ENCODE measurements at regions of chr17 and their contacts with region 1.

Region 1: GRCh38 chr17:75412455-75413317 is 7.2 kb upstream of the GRB2 start:
- DNase-seq: peak; percentile 49 to 88 (median 73)
- ATAC-seq: peak; percentile 90
- H3K4me3 ChIP-seq: peak overlapping the region in 1 of 2 experiments; percentile 22
- H3K4me3 Mint-ChIP-seq: peak overlapping the region; percentile 72
- H3K27ac ChIP-seq: no peak overlapping the region
- H3K27ac Mint-ChIP-seq: peak overlapping the region; percentile 62
- H3K4me1 ChIP-seq: peaks cover 8% of the 10 kb centered on the region
- H3K4me1 Mint-ChIP-seq: peaks cover 16% of the 10 kb centered on the region
- H3K27me3 ChIP-seq: no peaks in the 10 kb centered on the region
- H3K27me3 Mint-ChIP-seq: no peaks in the 10 kb centered on the region
- CTCF ChIP-seq: peak; percentile 70

Region 2: GRCh38 chr17:74493381-74493833 is 919.3 kb before region 1 on chr17:
- CTCF ChIA-PET with region 1: no interaction called
- POLR2A ChIA-PET with region 1: no interaction called
- intact Hi-C with region 1: no loop called
- DNase-seq: peak; percentile 51 to 82 (median 73)
- ATAC-seq: peak; percentile 83
- H3K4me3 ChIP-seq: no peak overlapping the region
- H3K4me3 Mint-ChIP-seq: no peak overlapping the region
- H3K27ac ChIP-seq: no peak overlapping the region
- H3K27ac Mint-ChIP-seq: no peak overlapping the region
- H3K4me1 ChIP-seq: no peaks in the 10 kb centered on the region
- H3K4me1 Mint-ChIP-seq: peaks cover 3% of the 10 kb centered on the region
- H3K27me3 ChIP-seq: no peaks in the 10 kb centered on the region
- H3K27me3 Mint-ChIP-seq: no peaks in the 10 kb centered on the region
- CTCF ChIP-seq: peak; percentile 93

Region 3: DNA sequence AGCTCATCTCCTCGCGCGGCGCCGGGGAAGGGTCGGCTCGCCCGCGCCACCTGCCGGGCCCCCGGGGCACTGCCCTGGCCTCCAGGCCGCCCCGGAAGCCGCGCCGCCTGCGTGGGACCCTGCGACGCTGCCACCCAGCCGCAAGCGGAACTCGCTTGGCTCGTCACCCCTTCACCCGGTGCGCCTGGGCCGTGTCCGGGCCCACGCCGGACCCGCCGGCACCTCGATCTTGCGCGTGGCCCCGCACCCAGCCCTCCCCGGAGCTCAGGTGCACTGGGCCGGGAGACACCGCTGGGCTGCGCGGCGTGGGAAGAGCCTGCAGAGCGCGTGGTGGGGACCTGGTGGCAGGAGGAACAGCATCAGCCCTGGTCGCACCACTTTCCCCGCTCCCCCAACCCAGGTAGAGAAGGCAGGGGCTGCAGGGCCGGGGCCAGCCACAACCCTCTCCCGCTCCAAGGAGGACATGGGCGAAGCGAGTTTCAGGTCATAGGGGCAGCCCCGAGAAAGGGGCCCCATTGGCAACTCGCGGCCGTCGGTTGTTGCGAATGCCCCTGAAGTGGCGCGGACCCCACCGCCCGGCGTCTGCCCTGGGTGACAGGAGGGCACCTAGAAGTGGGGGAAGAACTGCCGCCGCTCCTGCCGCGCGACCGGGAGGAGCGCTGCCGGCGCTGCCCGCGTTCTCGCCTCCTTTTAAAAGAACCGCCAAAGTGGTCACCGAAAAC is 141.3 kb before region 1 on chr17:
- CTCF ChIA-PET with region 1: interaction called, 13 read pairs
- POLR2A ChIA-PET with region 1: interaction called, 6 read pairs
- intact Hi-C with region 1: loop called (anchors 1 kb)
- DNase-seq: peak; percentile 75 to 94 (median 88)
- ATAC-seq: peak; percentile 92
- H3K4me3 ChIP-seq: peak overlapping the region; percentile 84 to 93
- H3K4me3 Mint-ChIP-seq: peak overlapping the region; percentile 81
- H3K27ac ChIP-seq: peak overlapping the region; percentile 82 to 91
- H3K27ac Mint-ChIP-seq: peak overlapping the region; percentile 84
- H3K4me1 ChIP-seq: peaks cover 18% of the 10 kb centered on the region
- H3K4me1 Mint-ChIP-seq: peaks cover 25% of the 10 kb centered on the region
- H3K27me3 ChIP-seq: no peaks in the 10 kb centered on the region
- H3K27me3 Mint-ChIP-seq: no peaks in the 10 kb centered on the region
- CTCF ChIP-seq: peak; percentile 65

Region 4: DNA sequence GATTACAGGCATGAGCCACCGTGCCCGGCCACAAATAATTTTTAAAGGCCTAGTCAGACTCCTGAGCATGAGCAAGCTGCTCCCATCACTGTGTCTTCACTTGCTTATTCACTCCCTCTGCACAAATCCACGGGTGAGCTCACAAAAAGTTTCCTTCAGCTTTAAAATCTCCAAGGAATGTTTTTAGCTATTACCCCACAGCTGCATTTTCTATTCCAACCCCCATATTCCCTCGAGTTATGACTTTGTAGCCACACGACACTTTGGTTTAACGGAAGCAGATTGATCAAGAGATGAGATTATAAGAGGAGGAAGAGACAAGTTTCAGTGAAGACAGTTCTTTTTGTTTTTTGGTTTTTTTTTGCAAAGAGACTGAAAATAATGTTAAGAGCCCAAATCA is 74.4 kb before region 1 on chr17:
- CTCF ChIA-PET with region 1: interaction called, 17 read pairs
- POLR2A ChIA-PET with region 1: no interaction called
- intact Hi-C with region 1: no loop called
- DNase-seq: peak in 1 of 9 experiments; percentile 57
- ATAC-seq: peak; percentile 45
- H3K4me3 ChIP-seq: peak overlapping the region in 1 of 2 experiments; percentile 5
- H3K4me3 Mint-ChIP-seq: peak overlapping the region; percentile 62
- H3K27ac ChIP-seq: peak overlapping the region; percentile 12 to 73
- H3K27ac Mint-ChIP-seq: peak overlapping the region; percentile 91
- H3K4me1 ChIP-seq: peaks cover 78% of the 10 kb centered on the region
- H3K4me1 Mint-ChIP-seq: peaks cover 78% of the 10 kb centered on the region
- H3K27me3 ChIP-seq: no peaks in the 10 kb centered on the region
- H3K27me3 Mint-ChIP-seq: no peaks in the 10 kb centered on the region
- CTCF ChIP-seq: no peak

Region 5: GRCh38 chr17:75393523-75394331 is 19.0 kb before region 1 on chr17:
- CTCF ChIA-PET with region 1: interaction called, 14 read pairs
- POLR2A ChIA-PET with region 1: interaction called, 5 read pairs
- intact Hi-C with region 1: no loop called
- DNase-seq: peak; percentile 47 to 92 (median 83)
- ATAC-seq: peak; percentile 84
- H3K4me3 ChIP-seq: peak overlapping the region; percentile 49 to 53
- H3K4me3 Mint-ChIP-seq: peak overlapping the region; percentile 94
- H3K27ac ChIP-seq: peak overlapping the region; percentile 3 to 63
- H3K27ac Mint-ChIP-seq: peak overlapping the region; percentile 90
- H3K4me1 ChIP-seq: peaks cover 55% of the 10 kb centered on the region
- H3K4me1 Mint-ChIP-seq: peaks cover 78% of the 10 kb centered on the region
- H3K27me3 ChIP-seq: no peaks in the 10 kb centered on the region
- H3K27me3 Mint-ChIP-seq: no peaks in the 10 kb centered on the region
- CTCF ChIP-seq: no peak

Region 6: DNA sequence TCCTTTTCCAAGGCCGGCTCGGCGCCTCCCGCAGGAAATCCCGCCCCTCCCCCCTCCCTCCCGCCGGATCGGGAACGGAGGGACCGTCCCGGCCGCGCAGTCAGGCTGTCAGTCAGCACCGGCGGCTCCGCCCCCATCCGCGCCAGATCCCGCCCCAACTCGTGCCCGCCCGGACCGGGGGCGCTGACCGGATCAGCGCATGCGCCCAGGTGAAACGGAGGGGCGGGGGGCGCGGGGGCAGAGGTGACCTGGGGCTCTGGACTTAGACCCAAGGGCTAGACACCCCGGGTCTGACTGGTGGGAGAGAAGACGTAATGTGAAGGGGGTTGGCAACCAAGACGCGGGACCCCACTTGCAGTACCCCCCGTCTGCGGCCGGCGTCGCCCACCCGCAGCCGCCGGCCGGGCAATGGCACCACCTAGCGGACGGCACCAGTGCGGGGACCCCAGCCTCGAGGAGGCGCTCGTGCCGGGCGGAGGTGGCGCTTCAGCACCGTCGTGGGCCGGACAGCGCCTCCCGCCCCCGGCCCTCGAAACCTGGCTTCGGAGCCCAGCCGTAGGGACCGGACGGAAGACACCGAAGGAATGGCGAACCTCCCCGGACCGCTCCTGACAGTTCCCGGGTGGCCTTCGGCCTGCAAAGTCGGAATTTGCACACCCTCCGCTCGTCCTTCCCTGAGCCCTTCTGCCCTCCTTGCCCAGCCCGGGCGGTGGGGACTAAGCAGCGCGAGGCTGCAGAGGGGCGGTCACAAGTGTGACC is 103.0 kb after region 1 on chr17 and contains the start of gene CASKIN2:
- CTCF ChIA-PET with region 1: interaction called, 10 read pairs
- POLR2A ChIA-PET with region 1: no interaction called
- intact Hi-C with region 1: no loop called
- DNase-seq: peak; percentile 56 to 89 (median 80)
- ATAC-seq: peak; percentile 59
- H3K4me3 ChIP-seq: peak within 1 kb of the TSS; percentile 79 to 97
- H3K4me3 Mint-ChIP-seq: peak within 1 kb of the TSS; percentile 77
- H3K27ac ChIP-seq: peak within 1 kb of the TSS in 1 of 2 experiments; percentile 32
- H3K27ac Mint-ChIP-seq: no peak within 1 kb of the TSS
- H3K4me1 ChIP-seq: peaks cover 35% of the 10 kb centered on the region
- H3K4me1 Mint-ChIP-seq: peaks cover 26% of the 10 kb centered on the region
- H3K27me3 ChIP-seq: no peaks in the 10 kb centered on the region
- H3K27me3 Mint-ChIP-seq: no peaks in the 10 kb centered on the region
- CTCF ChIP-seq: peak; percentile 99
- total RNA-seq, gene CASKIN2: 0.64 to 0.98 TPM